ENCODE measurements at regions of chr5 and their contacts with region 1.

Region 1: DNA sequence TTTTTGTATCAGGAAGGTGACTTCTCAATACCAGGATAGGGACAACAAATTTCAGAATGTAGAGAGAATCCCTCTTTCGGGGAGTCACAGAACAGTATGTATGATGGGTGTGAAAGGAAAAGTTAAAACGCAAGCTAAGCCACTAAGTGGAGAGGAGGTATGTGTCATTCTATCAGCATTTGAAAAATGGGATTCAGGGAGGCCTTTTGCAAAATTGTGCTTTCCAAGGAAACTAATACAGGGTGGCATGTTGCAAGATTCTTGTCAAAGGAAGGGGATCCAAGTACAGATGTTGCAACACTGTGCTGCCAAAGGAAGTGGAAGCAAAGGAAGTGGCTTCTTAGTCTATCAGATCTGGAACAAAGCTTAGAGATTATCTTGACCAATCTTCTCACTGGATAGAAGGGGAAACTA is 12.6 kb upstream of the TNIP1 start:
- DNase-seq: no peak
- H3K4me3 ChIP-seq: no peak overlapping the region
- H3K27ac ChIP-seq: peak overlapping the region; percentile 68 to 87
- H3K4me1 ChIP-seq: peaks cover 0 to 7% of the 10 kb centered on the region in 2 donors
- H3K27me3 ChIP-seq: no peaks in the 10 kb centered on the region
- CTCF ChIP-seq: no peak
- POLR2A ChIP-seq: no peak

Region 2: GRCh38 chr5:152462021-152462721 is 1368.7 kb after region 1 on chr5:
- intact Hi-C with region 1: loop called (anchors 10 kb)
- DNase-seq: no peak
- H3K4me3 ChIP-seq: no peak overlapping the region
- H3K27ac ChIP-seq: no peak overlapping the region
- H3K4me1 ChIP-seq: no peaks in the 10 kb centered on the region
- H3K27me3 ChIP-seq: no peaks in the 10 kb centered on the region
- CTCF ChIP-seq: no peak
- POLR2A ChIP-seq: no peak

Measured in breast epithelium (tissue), 4 donors.